ENCODE measurements at regions of chr9 and their contacts with region 1.

Region 1: GRCh38 chr9:2087500-2088313 is 72.6 kb downstream of the SMARCA2 start:
- DNase-seq: peak; percentile 32
- H3K4me3 ChIP-seq: no peak overlapping the region
- H3K27ac ChIP-seq: no peak overlapping the region
- H3K4me1 ChIP-seq: peaks cover 10% of the 10 kb centered on the region
- H3K27me3 ChIP-seq: no peaks in the 10 kb centered on the region
- CTCF ChIP-seq: peak; percentile 54 to 58
- POLR2A ChIP-seq: no peak

Region 2: GRCh38 chr9:1018121-1018701 is 1069.5 kb before region 1 on chr9:
- CTCF ChIA-PET with region 1: no interaction called
- POLR2A ChIA-PET with region 1: no interaction called
- dilution Hi-C with region 1: no loop called
- intact Hi-C with region 1: loop called (anchors 10 kb)
- DNase-seq: no peak
- H3K4me3 ChIP-seq: no peak overlapping the region
- H3K27ac ChIP-seq: no peak overlapping the region
- H3K4me1 ChIP-seq: no peaks in the 10 kb centered on the region
- H3K27me3 ChIP-seq: no peaks in the 10 kb centered on the region
- CTCF ChIP-seq: no peak
- POLR2A ChIP-seq: no peak

Region 3: GRCh38 chr9:1939926-1940368 is 147.8 kb before region 1 on chr9:
- CTCF ChIA-PET with region 1: interaction called, 19 read pairs
- POLR2A ChIA-PET with region 1: no interaction called
- dilution Hi-C with region 1: no loop called
- intact Hi-C with region 1: loop called (anchors 2 kb)
- DNase-seq: peak; percentile 10
- H3K4me3 ChIP-seq: no peak overlapping the region
- H3K27ac ChIP-seq: no peak overlapping the region
- H3K4me1 ChIP-seq: no peaks in the 10 kb centered on the region
- H3K27me3 ChIP-seq: no peaks in the 10 kb centered on the region
- CTCF ChIP-seq: peak; percentile 43 to 54
- POLR2A ChIP-seq: no peak

Region 4: DNA sequence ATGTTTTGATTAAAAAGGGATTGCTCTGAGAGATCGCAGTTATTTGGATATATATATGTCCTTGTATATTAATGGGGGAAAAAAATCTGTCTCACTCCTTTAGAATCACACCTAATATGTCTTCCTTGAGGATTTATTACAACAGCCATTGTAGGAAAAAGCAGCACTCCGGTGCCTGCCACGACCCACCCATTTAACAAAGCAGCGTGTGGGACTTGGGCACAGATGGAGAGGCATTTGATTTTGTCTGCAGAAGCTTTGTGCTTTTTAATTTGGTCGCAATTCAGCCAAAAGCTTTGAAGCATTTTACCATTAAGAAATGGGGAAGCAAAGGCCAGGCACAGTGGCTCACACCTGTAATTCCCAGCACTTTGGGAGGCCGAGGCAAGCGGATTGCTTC is 86.6 kb after region 1 on chr9:
- CTCF ChIA-PET with region 1: no interaction called
- POLR2A ChIA-PET with region 1: no interaction called
- dilution Hi-C with region 1: no loop called
- intact Hi-C with region 1: no loop called
- DNase-seq: no peak
- H3K4me3 ChIP-seq: no peak overlapping the region
- H3K27ac ChIP-seq: no peak overlapping the region
- H3K4me1 ChIP-seq: no peaks in the 10 kb centered on the region
- H3K27me3 ChIP-seq: no peaks in the 10 kb centered on the region
- CTCF ChIP-seq: no peak
- POLR2A ChIP-seq: no peak

Region 5: GRCh38 chr9:2427120-2427891 is 339.6 kb after region 1 on chr9:
- CTCF ChIA-PET with region 1: no interaction called
- POLR2A ChIA-PET with region 1: no interaction called
- dilution Hi-C with region 1: no loop called
- intact Hi-C with region 1: no loop called
- DNase-seq: no peak
- H3K4me3 ChIP-seq: no peak overlapping the region
- H3K27ac ChIP-seq: no peak overlapping the region
- H3K4me1 ChIP-seq: no peaks in the 10 kb centered on the region
- H3K27me3 ChIP-seq: no peaks in the 10 kb centered on the region
- CTCF ChIP-seq: no peak
- POLR2A ChIP-seq: no peak

Measured in endothelial cell of umbilical vein (primary cell).